K562 (cell line): ENCODE measurements at regions of chr18 and their contacts with region 1.

Region 1: DNA sequence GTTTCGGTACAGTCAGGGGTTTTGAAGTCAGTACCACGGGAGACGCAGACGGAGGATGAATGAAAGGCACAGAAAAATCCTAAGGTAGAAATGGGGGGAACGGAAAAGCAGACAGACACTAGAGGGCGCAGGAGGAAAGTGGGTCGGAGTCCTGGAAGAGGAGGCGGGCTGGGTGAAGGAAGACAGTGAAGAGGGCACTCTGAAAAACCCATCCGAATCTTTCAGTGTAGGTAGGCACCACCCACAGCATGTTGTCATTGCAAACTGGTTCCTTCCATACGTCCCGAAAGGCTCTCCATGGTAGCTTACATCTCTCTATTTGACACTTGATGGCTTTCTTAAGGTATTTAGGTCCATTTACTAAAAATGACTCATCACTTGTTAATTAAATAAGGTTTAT is 18.5 kb upstream of the ZNF236 start:
- DNase-seq: peak; percentile 45 to 75 (median 56)
- ATAC-seq: peak; percentile 82
- H3K4me3 ChIP-seq: no peak overlapping the region
- H3K27ac ChIP-seq: no peak overlapping the region
- H3K4me1 ChIP-seq: peaks cover 0 to 14% of the 10 kb centered on the region in 2 experiments; a peak in 3 of 5 replicates
- H3K27me3 ChIP-seq: 0 out of 5 replicates have a peak, but pooled peaks cover 0 to 5% of the 10 kb centered on the region in 2 experiments
- CTCF ChIP-seq: peak; percentile 72 to 83 (median 80)
- EP300 ChIP-seq: no peak
- POLR2A ChIP-seq: no peak
- RAD21 ChIP-seq: peak; percentile 57 to 65

Region 2: GRCh38 chr18:76679259-76679658 is 124.6 kb before region 1 on chr18:
- CTCF ChIA-PET with region 1: no interaction called
- POLR2A ChIA-PET with region 1: no interaction called
- in situ Hi-C with region 1: no loop called
- intact Hi-C with region 1: no loop called
- DNase-seq: no peak
- ATAC-seq: peak; percentile 31; the same call in 1 of the 3 replicates
- H3K4me3 ChIP-seq: no peak overlapping the region
- H3K27ac ChIP-seq: no peak overlapping the region
- H3K4me1 ChIP-seq: no peaks in the 10 kb centered on the region
- H3K27me3 ChIP-seq: peaks cover 0 to 35% of the 10 kb centered on the region in 2 experiments; a peak in 2 of 5 replicates
- CTCF ChIP-seq: no peak
- EP300 ChIP-seq: no peak
- POLR2A ChIP-seq: no peak
- RAD21 ChIP-seq: no peak

Region 3: DNA sequence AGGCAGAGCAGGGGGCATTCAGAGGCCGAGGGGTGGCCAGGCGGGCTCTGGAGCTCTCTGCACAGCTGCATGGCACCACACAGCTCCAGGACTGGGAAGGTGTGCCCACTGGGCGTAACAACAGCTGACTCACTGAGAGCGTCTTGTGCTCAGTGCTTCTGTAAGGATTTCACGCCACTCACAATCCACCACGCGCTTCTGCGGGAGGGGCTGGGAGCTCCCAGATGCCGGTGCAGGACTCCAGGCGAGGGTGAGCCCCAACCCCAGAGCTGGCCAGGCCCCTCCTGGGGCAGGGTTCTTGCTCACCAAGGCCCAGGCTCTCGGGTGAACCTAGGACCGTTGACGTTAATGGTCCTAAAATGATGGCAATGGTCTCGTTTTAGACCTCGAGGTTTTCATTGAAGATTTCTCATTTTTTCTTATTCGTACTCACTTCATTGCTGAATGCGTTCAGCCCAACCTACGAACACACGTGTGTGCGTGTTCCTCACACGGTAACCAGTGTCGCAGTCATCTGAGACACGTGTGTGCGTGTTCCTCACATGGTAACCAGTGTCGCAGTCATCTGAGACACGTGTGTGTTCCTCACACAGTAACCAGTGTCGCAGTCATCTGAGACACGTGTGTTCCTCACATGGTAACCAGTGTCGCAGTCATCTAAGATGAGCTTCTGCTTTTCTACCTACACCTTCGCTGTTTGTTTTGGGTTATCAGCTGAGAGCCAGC is 19.9 kb before region 1 on chr18:
- CTCF ChIA-PET with region 1: no interaction called
- POLR2A ChIA-PET with region 1: no interaction called
- in situ Hi-C with region 1: no loop called
- intact Hi-C with region 1: no loop called
- DNase-seq: no peak
- ATAC-seq: no peak
- H3K4me3 ChIP-seq: no peak overlapping the region
- H3K27ac ChIP-seq: no peak overlapping the region
- H3K4me1 ChIP-seq: peaks cover 0 to 4% of the 10 kb centered on the region in 2 experiments; a peak in 1 of 5 replicates
- H3K27me3 ChIP-seq: peaks cover 10 to 41% of the 10 kb centered on the region in 2 experiments; a peak in 4 of 5 replicates
- CTCF ChIP-seq: no peak
- EP300 ChIP-seq: no peak
- POLR2A ChIP-seq: no peak
- RAD21 ChIP-seq: no peak

Region 4: GRCh38 chr18:76875390-76876325 is 71.8 kb after region 1 on chr18:
- CTCF ChIA-PET with region 1: no interaction called
- POLR2A ChIA-PET with region 1: no interaction called
- in situ Hi-C with region 1: no loop called
- intact Hi-C with region 1: loop called (anchors 5 kb)
- DNase-seq: peak; percentile 24 to 64 (median 31)
- ATAC-seq: peak; percentile 94
- H3K4me3 ChIP-seq: no peak overlapping the region
- H3K27ac ChIP-seq: no peak overlapping the region
- H3K4me1 ChIP-seq: no peaks in the 10 kb centered on the region
- H3K27me3 ChIP-seq: no peaks in the 10 kb centered on the region
- CTCF ChIP-seq: peak; percentile 57 to 67 (median 60); a peak in 5 of 6 replicates
- EP300 ChIP-seq: no peak
- POLR2A ChIP-seq: no peak
- RAD21 ChIP-seq: peak; percentile 10 to 51; a peak in 2 of 4 replicates

Region 5: DNA sequence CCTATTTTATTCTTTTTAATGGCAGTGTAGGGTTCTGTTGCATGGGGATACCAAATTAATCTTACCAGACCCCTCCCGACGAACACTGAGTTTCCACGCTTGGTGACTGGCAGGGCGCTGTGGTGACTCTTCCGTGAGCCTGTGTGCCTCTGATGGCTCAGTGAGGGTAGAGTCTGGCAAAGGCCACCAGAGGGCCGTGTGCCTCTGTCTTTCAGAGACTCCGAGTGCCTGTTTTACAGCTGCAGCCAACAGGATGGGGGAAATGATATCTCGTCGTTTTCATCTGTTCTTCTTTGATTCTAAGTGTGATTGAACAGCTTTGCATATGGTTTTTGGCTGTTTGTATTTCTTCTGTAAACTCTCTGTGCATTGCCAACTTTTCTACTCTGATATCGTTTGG is 118.3 kb after region 1 on chr18:
- CTCF ChIA-PET with region 1: no interaction called
- POLR2A ChIA-PET with region 1: no interaction called
- in situ Hi-C with region 1: no loop called
- intact Hi-C with region 1: loop called (anchors 5 kb)
- DNase-seq: peak; percentile 11 to 22 (median 20)
- ATAC-seq: peak; percentile 87
- H3K4me3 ChIP-seq: no peak overlapping the region
- H3K27ac ChIP-seq: no peak overlapping the region
- H3K4me1 ChIP-seq: no peaks in the 10 kb centered on the region
- H3K27me3 ChIP-seq: no peaks in the 10 kb centered on the region
- CTCF ChIP-seq: peak; percentile 43 to 51 (median 47); a peak in 5 of 6 replicates
- EP300 ChIP-seq: no peak
- POLR2A ChIP-seq: no peak
- RAD21 ChIP-seq: peak in 1 of 2 experiments; percentile 37; a peak in 2 of 4 replicates

Region 6: DNA sequence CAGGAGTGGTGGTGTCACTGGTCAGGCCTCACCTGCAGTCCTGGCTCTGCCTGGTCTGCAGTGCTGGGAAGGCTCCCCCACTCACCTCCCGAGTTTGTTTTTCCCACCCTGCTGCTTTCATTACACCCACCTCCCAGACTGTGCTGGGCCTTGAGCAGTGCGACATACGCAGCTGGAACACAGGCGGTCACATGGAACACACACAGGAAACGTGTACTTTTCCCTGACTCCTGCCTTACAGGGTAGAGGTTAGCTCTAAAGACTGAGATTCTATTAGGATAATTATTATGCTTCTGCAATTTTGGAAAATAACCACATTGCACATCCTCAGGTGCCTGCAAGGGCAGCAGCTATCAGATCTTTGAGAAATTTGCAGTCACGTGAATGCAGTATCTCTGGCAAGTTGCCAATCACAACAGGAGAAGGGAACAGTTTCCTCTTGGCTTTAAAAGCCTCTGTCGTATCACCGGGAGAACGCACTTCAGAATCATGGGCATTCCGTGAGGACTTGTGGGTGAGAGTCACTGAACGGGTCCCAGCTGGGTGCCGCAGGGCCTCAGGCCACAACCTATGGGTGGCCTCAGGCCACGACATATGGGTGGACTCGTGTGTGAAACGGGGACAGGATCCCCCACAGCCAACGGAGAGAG is 155.0 kb after region 1 on chr18:
- CTCF ChIA-PET with region 1: no interaction called
- POLR2A ChIA-PET with region 1: no interaction called
- in situ Hi-C with region 1: no loop called
- intact Hi-C with region 1: no loop called
- DNase-seq: no peak
- ATAC-seq: no peak
- H3K4me3 ChIP-seq: no peak overlapping the region
- H3K27ac ChIP-seq: no peak overlapping the region
- H3K4me1 ChIP-seq: no peaks in the 10 kb centered on the region
- H3K27me3 ChIP-seq: no peaks in the 10 kb centered on the region
- CTCF ChIP-seq: no peak
- EP300 ChIP-seq: no peak
- POLR2A ChIP-seq: no peak
- RAD21 ChIP-seq: no peak

Region 7: DNA sequence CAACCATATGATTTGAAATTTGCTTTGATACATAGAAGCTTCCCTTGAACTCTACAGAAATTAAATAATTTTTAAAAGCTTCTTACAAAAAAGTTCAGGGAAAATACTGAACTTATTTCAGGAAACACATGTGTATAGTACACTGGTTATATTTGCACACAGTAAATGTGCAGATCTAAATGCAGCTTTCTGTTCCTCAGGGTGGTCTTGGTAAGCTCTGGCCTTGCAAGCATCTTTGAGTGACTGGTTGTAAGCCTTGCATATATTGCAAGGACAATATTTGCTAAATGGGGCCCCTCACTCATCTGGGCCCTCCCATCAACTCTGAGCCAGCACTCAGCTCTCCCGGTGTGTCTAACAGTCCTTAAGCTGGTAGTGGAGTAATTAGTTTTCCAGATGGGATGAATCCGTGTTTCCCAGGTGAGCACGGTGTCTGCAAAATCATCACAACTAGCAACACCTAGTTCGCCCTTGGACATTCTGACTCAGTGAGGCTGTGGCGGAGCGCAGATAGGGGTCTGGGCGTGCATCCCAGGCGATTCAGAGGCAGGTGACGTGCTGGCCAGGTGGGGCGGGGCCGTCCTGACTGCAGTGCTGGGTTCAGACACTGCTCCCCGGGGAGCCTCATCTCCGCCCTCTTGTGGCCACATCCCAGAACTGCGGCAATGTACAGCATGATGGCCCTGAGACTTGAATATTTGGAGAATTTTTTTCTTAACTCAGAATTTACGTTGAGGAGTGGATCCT is 179.2 kb after region 1 on chr18:
- CTCF ChIA-PET with region 1: interaction called, 20 read pairs
- POLR2A ChIA-PET with region 1: interaction called, 3 read pairs
- in situ Hi-C with region 1: loop called (anchors 5 kb)
- intact Hi-C with region 1: loop called (anchors 1 kb)
- DNase-seq: peak; percentile 82 to 84 (median 83)
- ATAC-seq: peak; percentile 96
- H3K4me3 ChIP-seq: no peak overlapping the region
- H3K27ac ChIP-seq: no peak overlapping the region
- H3K4me1 ChIP-seq: peaks cover 0 to 8% of the 10 kb centered on the region in 2 experiments; a peak in 2 of 5 replicates
- H3K27me3 ChIP-seq: peaks cover 19 to 67% of the 10 kb centered on the region in 2 experiments
- CTCF ChIP-seq: peak; percentile 78 to 86 (median 80)
- EP300 ChIP-seq: no peak
- POLR2A ChIP-seq: no peak
- RAD21 ChIP-seq: peak; percentile 37 to 60

Region 8: GRCh38 chr18:77054606-77055428 is 251.0 kb after region 1 on chr18:
- CTCF ChIA-PET with region 1: interaction called, 3 read pairs
- POLR2A ChIA-PET with region 1: no interaction called
- in situ Hi-C with region 1: no loop called
- intact Hi-C with region 1: loop called (anchors 1 kb)
- DNase-seq: peak; percentile 18 to 47 (median 26)
- ATAC-seq: peak; percentile 91
- H3K4me3 ChIP-seq: no peak overlapping the region
- H3K27ac ChIP-seq: no peak overlapping the region
- H3K4me1 ChIP-seq: no peaks in the 10 kb centered on the region
- H3K27me3 ChIP-seq: peaks cover 6 to 34% of the 10 kb centered on the region in 2 experiments; a peak in 4 of 5 replicates
- CTCF ChIP-seq: peak; percentile 56 to 67 (median 62)
- EP300 ChIP-seq: no peak
- POLR2A ChIP-seq: no peak
- RAD21 ChIP-seq: peak; percentile 33 to 67